ENCODE measurements at regions of chr6 and their contacts with region 1.

Region 1: GRCh38 chr6:34610819-34611477 is 54.8 kb upstream of the SPDEF start:
- DNase-seq: no peak
- ATAC-seq: no peak
- H3K4me3 Mint-ChIP-seq: no peak overlapping the region
- H3K27ac Mint-ChIP-seq: no peak overlapping the region
- H3K4me1 Mint-ChIP-seq: peaks cover 8% of the 10 kb centered on the region
- H3K27me3 Mint-ChIP-seq: no peaks in the 10 kb centered on the region

Region 2: DNA sequence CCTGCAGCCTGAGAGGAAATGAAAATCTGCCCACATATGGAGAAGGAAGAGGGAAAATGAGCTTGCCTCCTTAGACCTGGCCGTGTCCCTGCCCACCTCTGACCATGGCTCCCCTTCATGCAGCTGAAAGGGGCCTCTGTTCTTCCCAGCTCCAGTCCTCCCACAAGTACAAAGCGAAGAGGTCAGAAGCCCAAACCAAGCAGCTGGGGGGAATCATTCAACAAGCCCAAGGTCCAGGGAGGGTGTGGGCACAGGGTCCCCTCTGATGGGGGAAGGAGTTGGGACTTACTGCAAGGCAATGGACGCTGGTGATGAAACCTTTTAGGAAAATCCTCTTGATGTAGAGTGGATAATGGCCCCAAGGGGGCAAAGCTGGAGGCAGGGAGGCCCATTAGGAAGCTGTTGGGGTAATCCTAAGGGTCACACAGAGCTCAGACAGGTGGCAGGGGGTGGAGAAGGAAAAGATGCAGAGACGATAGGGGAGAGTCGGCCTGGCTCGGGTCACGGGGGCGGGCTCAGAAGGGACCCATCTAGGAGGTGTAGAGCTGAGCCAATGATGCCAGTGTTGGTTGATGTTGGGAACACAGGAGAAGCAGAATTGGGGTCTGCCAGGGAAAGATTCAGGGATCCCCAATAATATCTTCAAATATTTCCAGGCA is 449.0 kb before region 1 on chr6:
- CTCF ChIA-PET with region 1: interaction called, 6 read pairs
- POLR2A ChIA-PET with region 1: no interaction called
- intact Hi-C with region 1: loop called (anchors 1 to 10 kb)
- DNase-seq: no peak
- ATAC-seq: no peak
- H3K4me3 Mint-ChIP-seq: no peak overlapping the region
- H3K27ac Mint-ChIP-seq: no peak overlapping the region
- H3K4me1 Mint-ChIP-seq: no peaks in the 10 kb centered on the region
- H3K27me3 Mint-ChIP-seq: no peaks in the 10 kb centered on the region

Region 3: GRCh38 chr6:34248727-34249551 is 362.0 kb before region 1 on chr6 and contains the start of gene SMIM29:
- CTCF ChIA-PET with region 1: interaction called, 13 read pairs
- POLR2A ChIA-PET with region 1: no interaction called
- intact Hi-C with region 1: loop called (anchors 1 to 2 kb)
- DNase-seq: peak; percentile 99
- ATAC-seq: peak; percentile 83
- H3K4me3 Mint-ChIP-seq: peak within 1 kb of the TSS; percentile 76
- H3K27ac Mint-ChIP-seq: peak within 1 kb of the TSS; percentile 85
- H3K4me1 Mint-ChIP-seq: peaks cover 43% of the 10 kb centered on the region
- H3K27me3 Mint-ChIP-seq: no peaks in the 10 kb centered on the region
- total RNA-seq, gene SMIM29: 15.8 to 16.3 TPM

Region 4: GRCh38 chr6:34484899-34485298 is 126.0 kb before region 1 on chr6:
- CTCF ChIA-PET with region 1: interaction called, 3 read pairs
- POLR2A ChIA-PET with region 1: no interaction called
- intact Hi-C with region 1: loop called in 1 of 2 experiments (anchors 1 kb)
- DNase-seq: peak; percentile 90
- ATAC-seq: peak; percentile 98
- H3K4me3 Mint-ChIP-seq: peak overlapping the region; percentile 24
- H3K27ac Mint-ChIP-seq: peak overlapping the region; percentile 87
- H3K4me1 Mint-ChIP-seq: peaks cover 27% of the 10 kb centered on the region
- H3K27me3 Mint-ChIP-seq: no peaks in the 10 kb centered on the region

Region 5: DNA sequence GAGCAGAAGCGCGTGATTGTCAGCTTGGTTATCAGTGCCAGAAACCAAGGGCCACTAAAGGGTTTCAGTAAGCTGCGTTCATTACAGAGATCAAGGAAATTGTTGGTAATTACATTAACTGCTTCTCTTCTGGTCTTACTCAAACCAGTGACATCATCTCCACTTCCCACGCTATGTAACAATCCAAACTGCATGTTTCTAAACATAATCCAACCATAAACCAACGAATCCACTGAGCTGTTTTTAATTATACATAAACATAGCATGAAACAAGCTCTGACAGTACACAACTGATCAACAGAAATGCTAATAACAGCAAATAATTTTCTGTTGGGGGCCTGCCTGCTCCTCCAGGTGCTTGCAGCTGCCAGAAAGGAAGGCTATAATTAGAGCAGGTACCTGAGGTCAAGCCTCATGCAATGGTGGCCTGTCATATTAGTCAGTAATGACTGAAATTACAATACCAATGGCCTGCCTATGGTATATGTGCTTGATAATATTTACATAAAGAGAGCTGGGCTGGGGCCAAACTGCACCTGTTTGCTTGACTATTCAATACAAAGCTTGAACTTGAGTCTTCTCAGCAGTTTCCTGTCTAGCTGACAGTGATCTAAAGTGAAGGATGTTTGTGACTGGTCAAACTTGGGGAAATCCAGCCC is 45.6 kb after region 1 on chr6:
- CTCF ChIA-PET with region 1: interaction called, 3 read pairs
- POLR2A ChIA-PET with region 1: interaction called, 3 read pairs
- intact Hi-C with region 1: loop called in 1 of 2 experiments (anchors 1 kb)
- DNase-seq: peak; percentile 74
- ATAC-seq: peak; percentile 94
- H3K4me3 Mint-ChIP-seq: peak overlapping the region; percentile 58
- H3K27ac Mint-ChIP-seq: peak overlapping the region; percentile 90
- H3K4me1 Mint-ChIP-seq: peaks cover 55% of the 10 kb centered on the region
- H3K27me3 Mint-ChIP-seq: no peaks in the 10 kb centered on the region